ENCODE measurements at regions of chr20 and their contacts with region 1.

Region 1: DNA sequence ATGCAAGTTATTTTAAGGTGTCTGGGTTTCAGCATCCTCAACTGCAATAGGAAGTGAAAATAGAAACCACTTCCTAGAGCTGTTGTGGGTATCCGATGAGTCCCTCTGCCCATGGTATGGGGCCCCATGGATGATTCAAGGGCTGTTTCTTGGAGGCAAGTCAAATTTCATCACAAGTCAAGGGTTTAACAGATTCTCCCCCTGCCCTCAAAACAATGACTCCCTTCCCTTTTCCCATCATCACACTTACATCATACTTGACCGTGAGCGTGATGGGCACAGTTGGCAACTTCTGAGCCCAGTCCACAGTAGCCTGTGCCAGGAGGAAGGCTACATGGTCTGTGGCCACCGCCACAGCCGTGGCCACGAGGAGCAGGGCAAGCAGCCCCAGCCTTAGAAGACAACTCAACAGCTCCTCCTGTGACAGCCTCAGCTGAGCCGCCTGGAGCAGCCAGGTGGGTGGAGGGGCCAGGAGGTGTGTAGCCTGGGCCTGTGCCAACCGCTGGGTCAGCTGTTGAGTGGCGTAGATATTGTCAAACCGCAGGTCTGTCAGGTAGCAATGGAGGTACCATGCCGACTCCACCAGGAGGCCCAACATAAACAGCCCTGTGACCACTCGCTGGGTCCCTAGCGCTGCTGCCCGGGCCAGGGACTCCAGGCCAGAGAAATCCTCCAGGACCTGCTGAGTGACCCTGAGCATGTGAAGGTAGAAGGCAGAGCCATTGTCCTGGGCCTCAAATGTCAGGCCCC is 5.2 kb downstream of the OCSTAMP start:
- DNase-seq: peak; percentile 87
- ATAC-seq: peak; percentile 88
- H3K4me3 Mint-ChIP-seq: peak overlapping the region; percentile 59
- H3K27ac Mint-ChIP-seq: no peak overlapping the region
- H3K4me1 Mint-ChIP-seq: peaks cover 13% of the 10 kb centered on the region
- H3K27me3 Mint-ChIP-seq: peaks cover 2% of the 10 kb centered on the region

Region 2: DNA sequence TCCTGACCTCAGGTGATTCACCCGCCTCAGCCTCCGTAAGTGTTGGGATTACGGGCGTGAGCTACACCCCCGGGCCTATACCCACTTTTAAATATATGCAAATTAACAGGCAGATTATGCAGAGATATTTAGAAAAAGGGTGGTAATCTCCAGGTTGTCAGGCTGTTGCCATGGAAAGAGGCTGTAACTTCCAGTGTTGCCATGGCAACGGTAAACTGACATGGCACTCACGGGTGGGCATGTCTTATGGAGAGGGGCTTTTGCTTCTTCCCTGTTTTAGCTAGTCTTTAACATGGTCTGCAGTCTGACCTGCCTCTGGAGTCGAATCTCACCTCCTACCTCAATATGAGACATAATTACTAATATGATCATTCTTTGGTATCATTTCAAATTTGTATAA is 76.7 kb before region 1 on chr20:
- CTCF ChIA-PET with region 1: no interaction called
- DNase-seq: no peak
- ATAC-seq: no peak
- H3K4me3 Mint-ChIP-seq: no peak overlapping the region
- H3K27ac Mint-ChIP-seq: no peak overlapping the region
- H3K4me1 Mint-ChIP-seq: no peaks in the 10 kb centered on the region
- H3K27me3 Mint-ChIP-seq: peaks cover 26% of the 10 kb centered on the region

Region 3: GRCh38 chr20:46494077-46494476 is 51.2 kb before region 1 on chr20:
- CTCF ChIA-PET with region 1: no interaction called
- DNase-seq: no peak
- ATAC-seq: no peak
- H3K4me3 Mint-ChIP-seq: no peak overlapping the region
- H3K27ac Mint-ChIP-seq: no peak overlapping the region
- H3K4me1 Mint-ChIP-seq: no peaks in the 10 kb centered on the region
- H3K27me3 Mint-ChIP-seq: peaks cover 41% of the 10 kb centered on the region

Region 4: GRCh38 chr20:46520976-46521579 is 24.2 kb before region 1 on chr20:
- CTCF ChIA-PET with region 1: interaction called, 16 read pairs
- DNase-seq: peak; percentile 75
- ATAC-seq: peak; percentile 81
- H3K4me3 Mint-ChIP-seq: no peak overlapping the region
- H3K27ac Mint-ChIP-seq: no peak overlapping the region
- H3K4me1 Mint-ChIP-seq: no peaks in the 10 kb centered on the region
- H3K27me3 Mint-ChIP-seq: peaks cover 19% of the 10 kb centered on the region

Region 5: GRCh38 chr20:46562373-46563169 is 17.3 kb after region 1 on chr20:
- CTCF ChIA-PET with region 1: interaction called, 69 read pairs
- DNase-seq: peak; percentile 81
- ATAC-seq: peak; percentile 79
- H3K4me3 Mint-ChIP-seq: no peak overlapping the region
- H3K27ac Mint-ChIP-seq: no peak overlapping the region
- H3K4me1 Mint-ChIP-seq: peaks cover 29% of the 10 kb centered on the region
- H3K27me3 Mint-ChIP-seq: peaks cover 5% of the 10 kb centered on the region

Region 6: GRCh38 chr20:46631212-46631869 is 86.1 kb after region 1 on chr20:
- CTCF ChIA-PET with region 1: interaction called, 11 read pairs
- DNase-seq: peak; percentile 60
- ATAC-seq: peak; percentile 78
- H3K4me3 Mint-ChIP-seq: no peak overlapping the region
- H3K27ac Mint-ChIP-seq: no peak overlapping the region
- H3K4me1 Mint-ChIP-seq: peaks cover 13% of the 10 kb centered on the region
- H3K27me3 Mint-ChIP-seq: peaks cover 71% of the 10 kb centered on the region

Region 7: DNA sequence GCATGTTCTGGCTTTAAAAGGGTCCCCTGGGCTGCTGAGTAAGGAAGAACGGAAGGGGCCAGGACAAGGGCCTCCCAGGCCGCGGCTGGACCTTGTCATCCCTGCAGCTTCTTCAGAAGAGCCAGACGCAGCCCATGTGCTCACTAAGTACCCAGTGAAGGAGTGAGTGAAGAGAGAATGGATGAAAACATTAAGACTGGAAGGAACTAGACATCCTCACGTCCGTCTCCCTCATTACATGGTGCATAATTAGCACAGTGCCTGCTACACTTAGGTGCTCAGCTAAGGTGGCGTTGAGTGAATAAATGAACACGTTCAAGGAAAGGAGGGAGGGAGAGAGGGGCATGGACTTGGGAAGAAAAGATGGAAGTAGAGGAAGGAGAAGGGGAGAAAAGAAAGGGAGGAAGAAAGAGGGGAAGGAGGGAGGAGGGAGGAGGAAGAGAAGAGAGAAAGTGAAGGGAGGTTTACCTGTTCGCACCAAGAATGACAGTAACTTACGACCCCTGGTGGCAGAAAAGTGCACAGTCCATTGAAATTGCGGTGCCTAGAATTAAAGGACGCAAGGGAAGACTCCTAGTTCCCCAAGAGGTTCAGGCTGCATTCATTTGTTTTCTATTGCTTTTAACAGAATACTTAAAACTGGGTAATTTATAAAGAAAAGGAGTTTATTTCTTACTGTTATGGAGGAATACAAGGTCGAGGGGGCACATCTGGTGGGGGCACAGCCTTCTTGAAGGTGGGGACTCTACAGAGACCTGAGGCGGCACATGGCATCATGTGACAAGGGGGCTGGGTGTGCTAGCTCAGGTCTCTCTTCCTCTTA is 136.0 kb after region 1 on chr20:
- CTCF ChIA-PET with region 1: interaction called, 65 read pairs
- DNase-seq: peak; percentile 81
- ATAC-seq: peak; percentile 69
- H3K4me3 Mint-ChIP-seq: no peak overlapping the region
- H3K27ac Mint-ChIP-seq: peak overlapping the region; percentile 45
- H3K4me1 Mint-ChIP-seq: peaks cover 32% of the 10 kb centered on the region
- H3K27me3 Mint-ChIP-seq: no peaks in the 10 kb centered on the region

Region 8: DNA sequence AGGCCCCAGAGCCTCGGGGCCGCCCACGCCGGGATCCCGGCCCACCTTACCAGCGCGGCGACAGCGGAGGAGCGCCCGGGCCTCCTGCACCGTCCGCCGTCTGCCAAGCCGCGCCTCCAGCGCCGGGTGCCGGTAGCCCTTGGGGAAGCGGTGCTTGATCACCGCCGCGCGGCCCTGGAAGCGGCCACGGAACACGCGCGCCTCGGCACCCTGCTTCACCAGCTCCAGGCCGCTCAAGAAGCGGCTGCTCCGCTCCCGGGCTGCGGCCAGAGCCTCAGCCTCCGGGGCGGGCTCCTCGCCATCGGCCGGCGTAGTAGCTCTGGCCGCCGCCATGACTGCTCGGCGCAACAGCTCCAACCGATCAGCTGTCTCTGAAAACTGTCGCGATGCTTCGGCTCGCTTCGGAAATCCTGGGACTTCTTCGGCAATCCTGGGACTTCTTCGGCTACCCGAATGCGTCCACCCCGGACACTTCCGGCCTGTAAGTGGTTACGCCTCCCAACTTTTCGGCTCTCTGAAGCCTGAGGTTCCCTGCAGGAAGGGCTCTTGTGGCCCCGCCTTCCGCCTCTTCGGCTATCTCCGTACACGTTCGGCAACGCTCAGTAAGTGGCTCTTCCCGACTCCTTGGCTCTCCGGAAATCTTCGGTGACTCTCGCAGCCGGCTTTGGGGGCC is 144.0 kb after region 1 on chr20 and contains the start of gene TP53RK:
- CTCF ChIA-PET with region 1: interaction called, 65 read pairs
- DNase-seq: peak; percentile 99
- ATAC-seq: peak; percentile 98
- H3K4me3 Mint-ChIP-seq: peak within 1 kb of the TSS; percentile 95
- H3K27ac Mint-ChIP-seq: peak within 1 kb of the TSS; percentile 93
- H3K4me1 Mint-ChIP-seq: peaks cover 38% of the 10 kb centered on the region
- H3K27me3 Mint-ChIP-seq: no peaks in the 10 kb centered on the region
- total RNA-seq, gene TP53RK: 14.8 to 20.9 TPM